ENCODE measurements at regions of chr16 and their contacts with region 1.

Region 1: DNA sequence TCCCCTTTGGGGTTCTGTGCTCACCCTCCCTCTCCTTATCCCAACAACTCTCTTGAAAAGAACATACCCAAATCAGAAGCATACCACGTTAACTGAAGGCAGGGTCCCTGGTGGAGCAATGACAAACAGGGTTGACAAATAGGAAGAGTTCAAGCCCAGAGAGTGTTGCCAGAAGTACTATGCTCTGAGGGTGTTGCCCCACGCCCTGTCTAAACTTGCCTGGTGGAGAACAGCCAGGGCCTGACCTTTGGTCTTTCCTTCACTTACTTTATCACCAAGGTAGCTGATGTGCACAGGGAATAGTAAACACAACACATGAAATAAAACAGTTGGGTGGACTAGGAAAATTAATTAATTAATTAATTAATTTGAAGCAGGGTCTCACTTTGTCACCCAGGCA is 23.3 kb downstream of the ZNF75A start:
- DNase-seq: no peak
- ATAC-seq: no peak
- H3K4me3 ChIP-seq: no peak overlapping the region
- H3K27ac ChIP-seq: no peak overlapping the region
- H3K4me1 ChIP-seq: no peaks in the 10 kb centered on the region
- CTCF ChIP-seq: no peak
- EP300 ChIP-seq: no peak
- POLR2A ChIP-seq: no peak
- RAD21 ChIP-seq: no peak

Region 2: DNA sequence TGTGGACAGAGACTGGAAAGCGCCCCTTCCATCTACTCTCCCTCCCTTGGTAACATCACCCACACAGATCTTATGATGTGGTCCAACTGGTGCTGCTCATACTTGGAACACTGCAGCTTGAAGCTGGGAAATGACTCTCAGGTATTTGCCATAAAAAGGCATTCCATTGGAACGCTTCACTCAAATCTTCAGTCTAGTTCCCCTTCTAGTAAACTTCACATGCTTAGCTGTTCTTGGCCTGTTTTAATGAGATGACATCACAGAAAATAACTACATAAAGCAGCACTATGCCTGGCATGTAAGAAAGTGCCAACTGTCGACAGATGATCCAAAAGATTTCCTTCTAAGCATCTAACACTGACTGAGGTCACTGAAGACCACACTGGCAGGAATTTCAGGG is 36.0 kb before region 1 on chr16:
- CTCF ChIA-PET with region 1: no interaction called
- POLR2A ChIA-PET with region 1: interaction called, 10 read pairs
- DNase-seq: no peak
- ATAC-seq: no peak
- H3K4me3 ChIP-seq: no peak overlapping the region
- H3K27ac ChIP-seq: no peak overlapping the region
- H3K4me1 ChIP-seq: no peaks in the 10 kb centered on the region
- CTCF ChIP-seq: no peak
- EP300 ChIP-seq: no peak
- POLR2A ChIP-seq: no peak
- RAD21 ChIP-seq: no peak